Psoas muscle (tissue), 8 donors: ENCODE measurements at regions of chr1 and their contacts with region 1.

Region 1: DNA sequence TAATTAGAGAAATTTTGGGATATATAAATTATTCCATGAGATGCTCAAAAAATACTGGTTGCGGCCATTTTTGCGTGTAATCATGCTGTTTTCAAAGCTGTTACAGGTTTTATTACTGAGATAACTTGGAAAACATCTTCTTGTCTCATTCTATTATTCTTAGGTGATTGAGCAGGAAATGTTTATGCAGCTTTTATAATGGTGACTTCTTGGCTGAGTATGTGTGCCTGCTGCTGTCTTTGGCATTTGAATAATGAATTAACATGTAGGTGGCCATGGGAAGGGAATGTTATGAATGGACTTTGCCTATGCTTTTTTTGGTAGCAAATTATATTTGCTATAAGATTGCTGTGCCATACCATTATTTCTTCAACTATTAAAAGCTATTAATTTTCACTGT is 52.5 kb downstream of the RASAL2 start:
- DNase-seq: no peak
- ATAC-seq: no peak
- H3K4me3 ChIP-seq: no peak overlapping the region
- H3K27ac ChIP-seq: no peak overlapping the region
- H3K4me1 ChIP-seq: no peaks in the 10 kb centered on the region
- H3K27me3 ChIP-seq: no peaks in the 10 kb centered on the region
- CTCF ChIP-seq: no peak

Region 2: GRCh38 chr1:178109348-178110143 is 36.9 kb before region 1 on chr1:
- intact Hi-C with region 1: loop called in 1 of 2 experiments (anchors 5 kb)
- DNase-seq: no peak
- ATAC-seq: no peak
- H3K4me3 ChIP-seq: no peak overlapping the region
- H3K27ac ChIP-seq: no peak overlapping the region
- H3K4me1 ChIP-seq: peaks cover 2% of the 10 kb centered on the region
- H3K27me3 ChIP-seq: no peaks in the 10 kb centered on the region
- CTCF ChIP-seq: no peak

Region 3: DNA sequence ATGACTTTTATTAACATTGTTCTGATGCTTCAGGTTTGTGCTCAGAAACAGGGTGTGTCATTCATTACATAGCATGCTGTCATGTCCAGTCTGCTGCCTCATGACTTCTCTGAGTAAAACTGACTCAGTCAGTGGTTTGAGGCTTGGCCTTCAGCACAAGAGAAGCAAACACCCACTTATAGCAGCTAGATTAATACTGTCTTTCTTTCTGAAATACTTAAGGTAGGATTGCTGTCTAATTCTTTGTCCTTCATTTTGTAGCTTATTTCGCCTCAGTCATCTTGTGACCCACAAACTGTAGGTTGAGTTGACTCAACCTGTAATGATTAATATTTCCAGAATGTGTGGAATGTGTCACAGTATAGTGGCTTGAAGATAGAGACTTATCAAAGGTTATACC is 19.6 kb before region 1 on chr1:
- intact Hi-C with region 1: no loop called
- DNase-seq: no peak
- ATAC-seq: peak; percentile 58 to 77 (median 68)
- H3K4me3 ChIP-seq: no peak overlapping the region
- H3K27ac ChIP-seq: no peak overlapping the region
- H3K4me1 ChIP-seq: peaks cover 20% of the 10 kb centered on the region
- H3K27me3 ChIP-seq: no peaks in the 10 kb centered on the region
- CTCF ChIP-seq: no peak